CD4-positive, alpha-beta T cell (primary cell): ENCODE measurements at regions of chr11 and their contacts with region 1.

Region 1: DNA sequence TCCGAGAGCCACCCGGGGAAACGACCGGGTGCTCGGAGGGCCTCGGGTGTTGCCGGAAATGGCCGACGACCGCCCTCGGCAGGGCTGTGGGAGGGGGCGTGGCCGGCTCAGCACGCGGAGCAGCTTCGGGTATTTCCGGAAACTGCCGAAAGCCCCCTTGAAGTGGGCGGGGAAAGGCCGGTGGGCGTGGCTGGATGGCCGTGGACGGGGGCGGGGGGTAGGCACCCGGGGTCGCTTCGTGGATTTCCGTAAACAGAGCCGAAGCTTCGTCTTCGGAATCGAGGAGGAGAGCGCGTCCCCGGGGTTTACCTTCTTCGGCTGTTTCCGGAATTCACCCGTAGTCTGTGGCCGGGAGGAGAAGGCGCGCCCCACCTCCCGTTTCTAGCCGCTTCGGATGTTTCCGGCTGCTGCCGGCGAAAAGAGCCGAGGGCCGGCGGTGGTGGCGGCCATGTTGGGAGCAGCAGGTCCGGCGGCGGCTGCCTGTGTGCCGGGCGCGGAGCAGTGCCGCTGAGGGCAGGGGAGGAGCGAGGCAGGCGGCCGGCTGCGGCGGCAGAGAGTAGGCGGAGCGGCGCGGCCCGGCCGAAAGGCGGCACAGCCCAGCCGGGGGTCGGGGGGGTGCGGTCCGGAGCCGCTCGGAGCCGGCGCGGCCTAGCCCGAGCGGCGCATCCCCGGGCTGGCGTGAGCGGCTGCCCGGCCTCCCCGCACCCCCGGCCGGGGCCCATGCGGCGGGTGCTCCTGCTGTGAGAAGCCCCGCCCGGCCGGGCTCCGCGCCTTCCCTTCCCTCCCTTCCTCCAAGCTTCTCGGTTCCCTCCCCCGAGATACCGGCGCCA is at the start of gene MARK2:
- DNase-seq: peak; percentile 99 to 100 (median 100)
- ATAC-seq: peak; percentile 86
- H3K4me3 ChIP-seq: peak within 1 kb of the TSS; percentile 93
- H3K4me3 Mint-ChIP-seq: peak within 1 kb of the TSS; percentile 94
- H3K27ac ChIP-seq: peak within 1 kb of the TSS; percentile 46 to 73
- H3K27ac Mint-ChIP-seq: peak within 1 kb of the TSS; percentile 84
- H3K4me1 ChIP-seq: peaks cover 58% of the 10 kb centered on the region
- H3K4me1 Mint-ChIP-seq: peaks cover 59% of the 10 kb centered on the region
- H3K27me3 ChIP-seq: no peaks in the 10 kb centered on the region
- H3K27me3 Mint-ChIP-seq: no peaks in the 10 kb centered on the region
- CTCF ChIP-seq: no peak
- total RNA-seq, gene MARK2: 18.4 to 21.0 TPM

Region 2: DNA sequence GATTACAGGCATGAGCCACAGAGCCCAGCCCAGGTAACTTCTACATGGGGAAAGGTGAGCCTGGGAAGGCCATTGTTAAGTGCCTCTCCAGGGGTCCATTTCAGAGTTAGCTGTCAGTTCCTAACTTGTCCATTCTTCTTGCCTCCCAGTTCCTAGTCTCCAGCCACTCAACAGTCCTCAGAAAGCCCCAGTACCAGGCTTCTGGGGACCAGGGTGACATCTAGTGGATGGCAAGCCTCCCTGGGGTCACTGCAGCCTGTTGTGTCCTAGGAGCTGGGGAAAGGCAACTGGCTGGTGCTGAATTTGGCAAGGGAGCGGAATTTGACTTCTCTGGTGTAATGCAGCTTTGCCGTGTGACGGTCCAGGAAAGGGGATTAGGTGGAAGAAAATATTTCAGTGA is 330.9 kb before region 1 on chr11:
- CTCF ChIA-PET with region 1: no interaction called
- POLR2A ChIA-PET with region 1: no interaction called
- intact Hi-C with region 1: no loop called
- DNase-seq: peak in 3 of 14 experiments; percentile 21 to 34 (median 32)
- ATAC-seq: no peak
- H3K4me3 ChIP-seq: no peak overlapping the region
- H3K4me3 Mint-ChIP-seq: no peak overlapping the region
- H3K27ac ChIP-seq: no peak overlapping the region
- H3K27ac Mint-ChIP-seq: no peak overlapping the region
- H3K4me1 ChIP-seq: peaks cover 11% of the 10 kb centered on the region
- H3K4me1 Mint-ChIP-seq: peaks cover 8% of the 10 kb centered on the region
- H3K27me3 ChIP-seq: no peaks in the 10 kb centered on the region
- H3K27me3 Mint-ChIP-seq: no peaks in the 10 kb centered on the region
- CTCF ChIP-seq: no peak

Region 3: DNA sequence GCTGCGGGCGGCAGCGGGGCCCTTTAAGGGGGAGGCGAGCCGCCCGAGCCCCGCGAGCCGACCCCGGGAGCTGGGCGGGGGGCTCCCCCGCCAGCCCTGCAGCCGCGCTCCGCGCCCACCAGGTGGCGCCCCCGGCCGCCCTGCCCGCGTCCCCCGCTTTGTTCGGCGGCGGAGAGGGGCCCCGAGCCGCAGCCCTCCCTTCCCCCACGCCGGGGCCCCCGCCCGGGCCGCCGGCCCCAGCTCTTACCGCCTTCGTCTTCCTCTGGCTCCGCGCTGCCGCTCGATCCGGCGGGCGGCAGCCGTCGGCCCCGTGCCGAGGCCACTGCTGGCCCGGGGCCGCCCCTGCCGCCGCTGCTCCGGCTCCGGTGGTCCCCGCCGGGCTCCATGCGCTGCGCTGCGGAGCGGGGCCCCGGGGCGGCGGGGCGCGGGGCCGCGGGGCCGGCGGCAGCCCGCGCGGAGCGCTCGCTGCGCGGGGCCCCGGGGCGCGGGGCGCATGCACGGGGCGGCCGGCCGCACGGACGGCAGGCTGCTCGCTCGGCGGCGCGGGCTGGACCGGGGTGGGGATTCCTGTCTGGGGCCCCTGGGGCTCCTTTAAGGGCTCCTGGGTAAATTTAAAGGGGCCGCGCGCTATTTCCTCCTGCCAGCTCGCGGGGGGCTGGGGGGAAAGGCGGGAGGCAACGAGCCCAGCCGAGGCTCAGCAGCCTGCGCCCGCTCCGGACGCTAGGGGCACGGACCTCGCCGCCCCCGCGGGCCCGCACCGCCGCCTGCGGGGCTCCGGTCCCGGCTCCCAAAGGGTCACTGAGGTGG is 70.5 kb before region 1 on chr11 and contains the start of gene ZFTA:
- CTCF ChIA-PET with region 1: interaction called, 3 read pairs
- POLR2A ChIA-PET with region 1: no interaction called
- intact Hi-C with region 1: loop called in 1 of 2 experiments (anchors 1 kb)
- DNase-seq: peak; percentile 21 to 81 (median 52)
- ATAC-seq: peak; percentile 68
- H3K4me3 ChIP-seq: peak within 1 kb of the TSS; percentile 82
- H3K4me3 Mint-ChIP-seq: peak within 1 kb of the TSS; percentile 97
- H3K27ac ChIP-seq: no peak within 1 kb of the TSS
- H3K27ac Mint-ChIP-seq: peak within 1 kb of the TSS; percentile 16
- H3K4me1 ChIP-seq: peaks cover 20% of the 10 kb centered on the region
- H3K4me1 Mint-ChIP-seq: peaks cover 13% of the 10 kb centered on the region
- H3K27me3 ChIP-seq: peaks cover 10 to 19% of the 10 kb centered on the region in 2 experiments
- H3K27me3 Mint-ChIP-seq: peaks cover 11% of the 10 kb centered on the region
- CTCF ChIP-seq: no peak
- total RNA-seq, gene ZFTA: 0.95 to 1.0 TPM

Region 4: GRCh38 chr11:63871962-63872799 is 33.3 kb after region 1 on chr11:
- CTCF ChIA-PET with region 1: interaction called, 12 read pairs
- POLR2A ChIA-PET with region 1: interaction called, 9 read pairs
- intact Hi-C with region 1: no loop called
- DNase-seq: peak in 10 of 14 experiments; percentile 15 to 80 (median 32)
- ATAC-seq: peak; percentile 71
- H3K4me3 ChIP-seq: no peak overlapping the region
- H3K4me3 Mint-ChIP-seq: peak overlapping the region; percentile 49
- H3K27ac ChIP-seq: no peak overlapping the region
- H3K27ac Mint-ChIP-seq: peak overlapping the region; percentile 33
- H3K4me1 ChIP-seq: peaks cover 80% of the 10 kb centered on the region
- H3K4me1 Mint-ChIP-seq: peaks cover 83% of the 10 kb centered on the region
- H3K27me3 ChIP-seq: no peaks in the 10 kb centered on the region
- H3K27me3 Mint-ChIP-seq: no peaks in the 10 kb centered on the region
- CTCF ChIP-seq: no peak

Region 5: GRCh38 chr11:63906585-63906984 is 67.7 kb after region 1 on chr11:
- CTCF ChIA-PET with region 1: interaction called, 36 read pairs
- POLR2A ChIA-PET with region 1: interaction called, 9 read pairs
- intact Hi-C with region 1: loop called (anchors 1 kb)
- DNase-seq: peak; percentile 47 to 79 (median 60)
- ATAC-seq: peak; percentile 82
- H3K4me3 ChIP-seq: no peak overlapping the region
- H3K4me3 Mint-ChIP-seq: no peak overlapping the region
- H3K27ac ChIP-seq: no peak overlapping the region
- H3K27ac Mint-ChIP-seq: peak overlapping the region; percentile 36
- H3K4me1 ChIP-seq: no peaks in the 10 kb centered on the region
- H3K4me1 Mint-ChIP-seq: no peaks in the 10 kb centered on the region
- H3K27me3 ChIP-seq: no peaks in the 10 kb centered on the region
- H3K27me3 Mint-ChIP-seq: no peaks in the 10 kb centered on the region
- CTCF ChIP-seq: peak; percentile 59

Region 6: DNA sequence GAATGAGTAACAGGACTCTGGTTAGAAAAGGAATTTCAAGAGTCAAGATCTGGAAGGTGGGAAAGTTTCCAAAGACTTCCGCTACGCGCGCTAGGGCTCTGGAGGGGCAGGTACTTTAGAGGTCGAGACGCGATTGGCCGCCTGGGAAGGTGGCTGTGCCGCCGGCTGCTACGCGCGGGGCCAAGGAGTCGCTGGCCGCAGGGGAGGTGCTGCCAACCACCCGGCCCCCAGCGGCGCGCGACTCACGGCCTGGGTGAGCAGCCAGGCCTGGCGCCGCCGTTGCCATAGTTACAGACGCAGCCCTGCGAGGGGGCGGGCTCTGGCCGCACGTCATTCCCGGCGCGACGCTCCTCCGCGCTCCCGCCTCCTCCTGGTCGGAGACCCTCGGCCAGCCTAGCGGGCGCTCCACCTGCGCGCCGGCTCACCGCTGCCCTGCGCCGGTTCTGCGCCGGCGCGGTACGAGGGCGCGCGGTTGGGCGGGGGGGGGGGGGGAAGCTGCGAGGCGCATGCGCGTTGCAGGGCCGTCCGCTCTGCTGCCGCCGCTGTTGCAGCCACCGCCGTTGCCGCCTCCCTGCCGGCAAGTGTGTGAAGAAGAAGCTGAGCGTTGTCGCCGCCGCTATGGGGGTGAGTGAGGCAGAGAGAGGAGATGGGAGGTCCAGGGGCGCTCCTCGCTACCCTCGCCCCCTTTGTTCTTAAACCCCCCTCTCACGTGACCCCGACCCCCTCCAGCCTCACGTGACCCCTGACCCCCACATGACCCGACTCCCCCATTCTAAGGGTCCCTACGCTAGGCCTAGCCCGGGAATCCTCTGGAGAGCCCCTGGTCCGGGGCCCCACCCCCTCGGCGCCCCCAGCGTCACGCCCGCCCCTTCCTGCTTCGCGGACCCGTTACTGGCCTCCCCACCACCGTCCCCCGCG is 99.8 kb after region 1 on chr11 and contains the start of gene NAA40:
- CTCF ChIA-PET with region 1: no interaction called
- POLR2A ChIA-PET with region 1: interaction called, 36 read pairs
- intact Hi-C with region 1: loop called in 1 of 2 experiments (anchors 2 kb)
- DNase-seq: peak; percentile 77 to 98 (median 87)
- ATAC-seq: peak; percentile 85
- H3K4me3 ChIP-seq: peak within 1 kb of the TSS; percentile 80
- H3K4me3 Mint-ChIP-seq: peak within 1 kb of the TSS; percentile 88
- H3K27ac ChIP-seq: peak within 1 kb of the TSS; percentile 44 to 68
- H3K27ac Mint-ChIP-seq: peak within 1 kb of the TSS; percentile 45
- H3K4me1 ChIP-seq: peaks cover 23% of the 10 kb centered on the region
- H3K4me1 Mint-ChIP-seq: peaks cover 26% of the 10 kb centered on the region
- H3K27me3 ChIP-seq: no peaks in the 10 kb centered on the region
- H3K27me3 Mint-ChIP-seq: no peaks in the 10 kb centered on the region
- CTCF ChIP-seq: peak; percentile 6
- total RNA-seq, gene NAA40: 11.8 to 14.0 TPM

Region 7: GRCh38 chr11:63974259-63975143 is 135.6 kb after region 1 on chr11 and contains the start of gene COX8A:
- CTCF ChIA-PET with region 1: interaction called, 4 read pairs
- POLR2A ChIA-PET with region 1: no interaction called
- intact Hi-C with region 1: loop called in 1 of 2 experiments (anchors 10 kb)
- DNase-seq: peak; percentile 85 to 99 (median 90)
- ATAC-seq: peak; percentile 99
- H3K4me3 ChIP-seq: peak within 1 kb of the TSS; percentile 94
- H3K4me3 Mint-ChIP-seq: peak within 1 kb of the TSS; percentile 100
- H3K27ac ChIP-seq: peak within 1 kb of the TSS; percentile 90 to 95
- H3K27ac Mint-ChIP-seq: peak within 1 kb of the TSS; percentile 99
- H3K4me1 ChIP-seq: peaks cover 27% of the 10 kb centered on the region
- H3K4me1 Mint-ChIP-seq: peaks cover 25% of the 10 kb centered on the region
- H3K27me3 ChIP-seq: peaks cover 0 to 4% of the 10 kb centered on the region in 2 experiments
- H3K27me3 Mint-ChIP-seq: no peaks in the 10 kb centered on the region
- CTCF ChIP-seq: no peak
- total RNA-seq, gene COX8A: 89.1 to 105 TPM

Region 8: GRCh38 chr11:64152841-64153691 is 314.2 kb after region 1 on chr11:
- CTCF ChIA-PET with region 1: no interaction called
- POLR2A ChIA-PET with region 1: no interaction called
- intact Hi-C with region 1: loop called (anchors 1 kb)
- DNase-seq: peak; percentile 40 to 83 (median 63)
- ATAC-seq: peak; percentile 96
- H3K4me3 ChIP-seq: no peak overlapping the region
- H3K4me3 Mint-ChIP-seq: no peak overlapping the region
- H3K27ac ChIP-seq: no peak overlapping the region
- H3K27ac Mint-ChIP-seq: no peak overlapping the region
- H3K4me1 ChIP-seq: peaks cover 12% of the 10 kb centered on the region
- H3K4me1 Mint-ChIP-seq: no peaks in the 10 kb centered on the region
- H3K27me3 ChIP-seq: no peaks in the 10 kb centered on the region
- H3K27me3 Mint-ChIP-seq: no peaks in the 10 kb centered on the region
- CTCF ChIP-seq: peak; percentile 99